IMR-90 (cell line): ENCODE measurements at regions of chr2 and their contacts with region 1.

Region 1: GRCh38 chr2:137535897-137536296 is 428.4 kb upstream of the HNMT start:
- DNase-seq: no peak
- ATAC-seq: no peak
- H3K4me3 ChIP-seq: no peak overlapping the region
- H3K27ac ChIP-seq: no peak overlapping the region
- H3K4me1 ChIP-seq: no peaks in the 10 kb centered on the region
- H3K27me3 ChIP-seq: no peaks in the 10 kb centered on the region
- CTCF ChIP-seq: no peak
- POLR2A ChIP-seq: no peak
- RAD21 ChIP-seq: no peak

Region 2: GRCh38 chr2:137262594-137262993 is 273.3 kb before region 1 on chr2:
- CTCF ChIA-PET with region 1: no interaction called
- POLR2A ChIA-PET with region 1: no interaction called
- dilution Hi-C with region 1: no loop called
- in situ Hi-C with region 1: no loop called
- intact Hi-C with region 1: loop called (anchors 5 kb)
- DNase-seq: no peak
- ATAC-seq: no peak
- H3K4me3 ChIP-seq: no peak overlapping the region
- H3K27ac ChIP-seq: no peak overlapping the region
- H3K4me1 ChIP-seq: no peaks in the 10 kb centered on the region
- H3K27me3 ChIP-seq: no peaks in the 10 kb centered on the region
- CTCF ChIP-seq: no peak
- POLR2A ChIP-seq: no peak
- RAD21 ChIP-seq: no peak

Region 3: DNA sequence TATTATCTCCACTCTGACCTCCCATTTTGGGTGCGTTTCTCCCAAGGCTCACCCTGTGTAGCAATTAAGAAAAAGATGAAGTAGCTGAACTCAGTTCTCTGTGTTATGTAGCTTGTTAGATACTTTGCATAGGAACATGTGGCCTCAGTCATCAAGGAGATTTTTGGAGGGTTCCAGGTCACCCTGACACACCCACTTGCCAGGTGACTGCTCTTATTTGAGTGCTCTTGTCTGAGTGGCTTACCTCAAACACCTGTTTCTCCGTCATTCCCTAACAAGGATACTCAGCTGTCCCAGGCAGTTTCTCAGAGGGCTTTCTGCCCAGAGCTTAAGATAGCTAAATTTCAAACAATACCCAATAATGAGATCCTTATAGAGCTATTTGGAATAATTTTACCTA is 148.9 kb before region 1 on chr2:
- CTCF ChIA-PET with region 1: no interaction called
- POLR2A ChIA-PET with region 1: no interaction called
- dilution Hi-C with region 1: no loop called
- in situ Hi-C with region 1: no loop called
- intact Hi-C with region 1: no loop called
- DNase-seq: no peak
- ATAC-seq: no peak
- H3K4me3 ChIP-seq: no peak overlapping the region
- H3K27ac ChIP-seq: no peak overlapping the region
- H3K4me1 ChIP-seq: no peaks in the 10 kb centered on the region
- H3K27me3 ChIP-seq: no peaks in the 10 kb centered on the region
- CTCF ChIP-seq: no peak
- POLR2A ChIP-seq: no peak
- RAD21 ChIP-seq: no peak

Region 4: DNA sequence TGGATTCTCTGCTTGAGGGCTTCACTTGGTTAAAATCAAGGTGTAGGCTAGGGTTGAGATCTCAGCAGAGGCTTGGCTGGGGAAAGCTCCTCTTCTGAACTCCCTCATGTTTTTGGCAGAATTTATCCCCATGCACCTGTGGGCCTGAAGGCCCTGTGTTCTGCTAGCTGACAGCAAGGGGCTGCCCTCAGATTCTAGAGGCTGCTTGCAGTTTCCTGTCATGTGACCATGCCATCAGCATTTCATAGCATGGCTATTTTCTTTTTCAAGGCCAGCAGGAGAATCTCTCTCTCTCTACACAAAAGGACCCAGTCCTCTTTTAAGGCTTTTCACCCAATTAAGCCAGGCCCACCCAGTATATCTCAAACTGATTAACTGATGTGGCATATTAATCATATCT is 86.4 kb before region 1 on chr2:
- CTCF ChIA-PET with region 1: no interaction called
- POLR2A ChIA-PET with region 1: no interaction called
- dilution Hi-C with region 1: no loop called
- in situ Hi-C with region 1: no loop called
- intact Hi-C with region 1: no loop called
- DNase-seq: no peak
- ATAC-seq: no peak
- H3K4me3 ChIP-seq: no peak overlapping the region
- H3K27ac ChIP-seq: no peak overlapping the region
- H3K4me1 ChIP-seq: no peaks in the 10 kb centered on the region
- H3K27me3 ChIP-seq: no peaks in the 10 kb centered on the region
- CTCF ChIP-seq: no peak
- POLR2A ChIP-seq: no peak
- RAD21 ChIP-seq: no peak